ENCODE measurements at regions of chr4 and their contacts with region 1.

Region 1: DNA sequence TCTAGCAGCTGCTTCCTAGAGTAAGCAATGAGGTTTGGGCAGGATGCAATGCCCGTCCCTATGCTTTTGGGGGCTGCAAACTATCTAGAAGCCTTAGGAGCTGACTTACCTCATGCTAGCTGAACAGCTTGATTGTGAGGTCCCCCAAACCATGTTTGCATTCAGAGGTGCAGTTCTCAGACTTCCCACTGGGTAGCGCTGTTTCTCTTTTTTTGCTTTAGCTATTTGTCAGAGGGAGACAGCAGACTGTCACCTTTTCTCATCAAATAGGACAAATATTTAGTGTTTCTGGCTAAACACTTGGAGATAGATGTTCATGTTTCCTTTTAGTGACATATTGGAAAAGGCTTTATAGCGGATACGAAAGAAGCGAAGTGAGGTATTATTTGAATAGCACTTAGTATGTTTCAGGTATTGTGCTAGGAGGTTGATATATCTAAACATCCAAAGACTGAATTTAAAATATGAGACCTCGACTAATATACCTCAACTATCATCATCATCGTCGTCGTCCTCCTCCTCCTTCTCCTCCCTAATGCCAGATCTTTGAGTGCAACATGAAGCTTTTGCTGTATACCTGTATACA is 18.7 kb upstream of the TMEM192 start:
- DNase-seq: peak in 1 of 2 donors; percentile 74
- H3K4me3 ChIP-seq: no peak overlapping the region
- H3K27ac ChIP-seq: no peak overlapping the region
- H3K4me1 ChIP-seq: no peaks in the 10 kb centered on the region
- H3K27me3 ChIP-seq: no peaks in the 10 kb centered on the region
- CTCF ChIP-seq: peak; percentile 82 to 95 (median 88)

Region 2: GRCh38 chr4:164894702-164895101 is 236.6 kb before region 1 on chr4:
- intact Hi-C with region 1: no loop called
- DNase-seq: no peak
- H3K4me3 ChIP-seq: no peak overlapping the region
- H3K27ac ChIP-seq: no peak overlapping the region
- H3K4me1 ChIP-seq: no peaks in the 10 kb centered on the region
- H3K27me3 ChIP-seq: no peaks in the 10 kb centered on the region
- CTCF ChIP-seq: no peak

Region 3: GRCh38 chr4:165327211-165328100 is 196.1 kb after region 1 on chr4 and contains the start of gene MSMO1:
- intact Hi-C with region 1: loop called (anchors 5 kb)
- DNase-seq: peak; percentile 99 to 100
- H3K4me3 ChIP-seq: peak within 1 kb of the TSS; percentile 72 to 99
- H3K27ac ChIP-seq: peak within 1 kb of the TSS; percentile 65 to 71
- H3K4me1 ChIP-seq: peaks cover 0 to 12% of the 10 kb centered on the region in 2 donors
- H3K27me3 ChIP-seq: no peaks in the 10 kb centered on the region
- CTCF ChIP-seq: no peak
- total RNA-seq, gene MSMO1: 3.6 TPM

Region 4: GRCh38 chr4:165355900-165356300 is 224.6 kb after region 1 on chr4:
- intact Hi-C with region 1: loop called (anchors 5 kb)
- DNase-seq: no peak
- H3K4me3 ChIP-seq: no peak overlapping the region
- H3K27ac ChIP-seq: no peak overlapping the region
- H3K4me1 ChIP-seq: no peaks in the 10 kb centered on the region
- H3K27me3 ChIP-seq: no peaks in the 10 kb centered on the region
- CTCF ChIP-seq: peak; percentile 32 to 57 (median 36)